ENCODE measurements at regions of chr19 and their contacts with region 1.

Region 1: DNA sequence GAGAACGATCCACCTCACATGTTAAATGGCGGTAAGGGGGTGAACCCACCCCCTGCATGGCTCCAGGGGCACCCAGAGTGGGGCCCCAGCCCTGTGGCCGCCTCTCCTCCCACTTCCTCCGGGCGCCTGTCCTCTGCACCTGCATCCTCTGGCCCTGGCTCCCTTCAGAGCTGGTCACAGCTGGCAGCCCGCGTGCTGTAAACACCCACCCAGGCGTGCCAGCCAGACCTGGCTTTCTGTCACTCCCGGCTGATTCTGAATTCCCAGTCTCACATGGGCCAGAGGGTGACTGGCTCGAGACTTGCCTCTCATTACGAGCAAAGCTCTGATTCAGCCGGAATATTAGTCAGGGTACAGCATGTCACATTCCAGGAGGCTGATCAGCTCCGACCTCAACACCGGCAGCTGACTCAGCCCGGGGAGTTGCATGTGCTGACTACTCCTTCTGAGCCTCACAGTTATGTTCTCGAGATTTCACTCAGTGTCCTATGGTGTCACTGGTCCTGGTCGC is 75.1 kb downstream of the GNG7 start:
- DNase-seq: peak; percentile 80
- H3K4me3 Mint-ChIP-seq: no peak overlapping the region
- H3K27ac Mint-ChIP-seq: peak overlapping the region; percentile 75
- H3K4me1 Mint-ChIP-seq: peaks cover 30% of the 10 kb centered on the region
- H3K27me3 Mint-ChIP-seq: no peaks in the 10 kb centered on the region

Region 2: DNA sequence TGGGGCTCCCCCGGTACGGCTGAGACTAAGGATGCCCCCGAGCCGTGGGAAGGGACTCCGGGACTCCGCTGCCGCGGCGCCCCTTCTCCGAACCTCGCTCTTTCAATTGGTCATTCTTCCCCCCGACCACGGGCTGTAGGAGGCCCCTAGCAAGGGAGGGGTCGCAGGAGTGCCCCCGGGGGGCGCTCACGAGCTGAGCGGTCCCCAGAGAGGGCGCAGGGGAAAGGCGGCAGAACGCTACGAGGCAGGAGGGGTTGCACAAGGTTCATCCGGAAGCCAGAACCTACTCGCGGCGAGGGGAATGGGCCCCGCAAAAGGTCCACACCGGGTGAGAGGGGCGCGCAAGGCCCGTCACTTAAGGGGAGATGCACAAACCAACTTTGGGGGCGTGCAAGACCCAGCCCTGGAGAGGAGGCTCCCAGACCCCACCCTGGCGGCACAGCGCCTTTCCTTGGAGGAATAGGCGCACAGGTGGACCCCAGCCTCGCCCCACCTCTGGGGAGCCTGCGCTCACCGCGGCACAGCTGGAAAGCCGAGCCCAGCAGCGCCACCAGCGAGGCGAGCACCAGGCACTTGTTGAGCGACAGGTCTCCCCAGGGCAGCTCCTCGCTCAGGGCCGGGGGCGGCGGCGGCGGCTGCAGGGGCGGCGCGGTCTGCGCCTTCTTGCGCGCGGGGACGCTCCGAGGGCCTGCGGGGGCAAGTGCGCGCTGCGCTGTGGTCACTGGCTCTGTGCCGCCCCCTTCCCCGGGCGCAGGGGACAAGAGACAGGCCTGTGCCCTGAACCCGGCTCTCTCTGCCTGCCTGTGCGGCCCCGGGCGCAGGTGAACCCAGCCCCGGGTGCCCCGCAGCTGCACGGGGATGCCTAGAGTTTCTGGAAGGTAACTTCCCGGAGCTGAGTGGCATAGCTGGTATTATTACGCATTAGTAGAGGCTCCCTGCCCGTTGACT is 374.0 kb before region 1 on chr19:
- CTCF ChIA-PET with region 1: no interaction called
- POLR2A ChIA-PET with region 1: no interaction called
- intact Hi-C with region 1: no loop called
- DNase-seq: peak; percentile 58
- H3K4me3 Mint-ChIP-seq: peak overlapping the region; percentile 6
- H3K27ac Mint-ChIP-seq: no peak overlapping the region
- H3K4me1 Mint-ChIP-seq: peaks cover 24% of the 10 kb centered on the region
- H3K27me3 Mint-ChIP-seq: peaks cover 15% of the 10 kb centered on the region

Region 3: DNA sequence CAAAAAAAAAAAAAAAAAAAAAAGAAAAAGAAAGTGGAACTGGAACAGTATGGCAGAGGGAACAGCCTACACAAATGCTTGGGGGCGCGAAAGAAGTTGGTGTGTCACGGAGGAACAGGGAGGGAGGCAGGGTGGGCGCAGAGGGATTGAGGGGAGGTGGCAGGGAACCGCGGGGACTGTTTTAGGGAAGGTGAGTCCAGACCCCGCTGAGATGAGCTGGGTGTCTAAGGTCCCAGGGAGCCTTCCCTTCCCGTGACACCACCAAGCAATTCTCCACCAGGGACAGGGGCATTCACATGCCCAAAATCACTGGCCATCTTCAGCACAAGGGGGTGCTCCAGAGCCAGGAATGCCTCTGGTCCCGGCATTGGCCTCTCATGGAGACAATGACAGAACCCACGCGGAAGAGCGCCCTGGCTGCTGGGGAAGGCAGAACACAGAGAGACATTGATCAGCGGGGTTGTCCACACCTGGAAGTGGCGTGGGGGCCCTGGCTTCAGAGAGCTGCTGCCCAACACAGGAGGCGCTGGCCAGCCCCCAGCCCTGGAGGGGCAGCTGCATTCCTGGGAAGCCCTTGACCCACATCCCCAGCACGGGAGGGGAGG is 352.3 kb before region 1 on chr19:
- CTCF ChIA-PET with region 1: no interaction called
- POLR2A ChIA-PET with region 1: no interaction called
- intact Hi-C with region 1: loop called (anchors 5 kb)
- DNase-seq: peak; percentile 63
- H3K4me3 Mint-ChIP-seq: no peak overlapping the region
- H3K27ac Mint-ChIP-seq: peak overlapping the region; percentile 28
- H3K4me1 Mint-ChIP-seq: peaks cover 25% of the 10 kb centered on the region
- H3K27me3 Mint-ChIP-seq: no peaks in the 10 kb centered on the region

Region 4: DNA sequence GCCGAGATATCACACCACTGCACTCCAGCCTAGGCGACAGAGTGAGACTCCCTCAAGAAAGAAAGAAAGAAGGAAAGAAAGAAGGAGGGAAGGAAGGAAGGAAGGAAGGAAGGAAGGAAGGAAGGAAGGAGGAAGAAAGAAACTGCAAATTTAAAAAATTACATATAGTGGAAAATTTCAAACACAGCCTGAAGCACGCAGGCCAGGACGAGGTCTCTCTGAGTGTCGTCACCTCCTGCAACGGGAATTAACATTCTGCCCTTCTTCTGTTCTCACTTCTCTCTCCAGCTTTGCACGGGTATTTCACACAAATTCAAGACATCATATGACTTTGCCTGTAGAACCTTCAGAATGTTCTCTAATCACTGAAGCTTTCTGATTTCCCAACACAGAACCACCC is 33.1 kb before region 1 on chr19:
- CTCF ChIA-PET with region 1: no interaction called
- POLR2A ChIA-PET with region 1: no interaction called
- intact Hi-C with region 1: no loop called
- DNase-seq: no peak
- H3K4me3 Mint-ChIP-seq: no peak overlapping the region
- H3K27ac Mint-ChIP-seq: no peak overlapping the region
- H3K4me1 Mint-ChIP-seq: peaks cover 8% of the 10 kb centered on the region
- H3K27me3 Mint-ChIP-seq: peaks cover 9% of the 10 kb centered on the region

Measured in activated CD4-positive, alpha-beta memory T cell treated with anti-CD3 and anti-CD28 coated beads for 36 hours (primary cell).